ENCODE measurements at regions of chr21 and their contacts with region 1.

Region 1: GRCh38 chr21:33947451-33948095 is 32.0 kb upstream of the ATP5PO start:
- DNase-seq: peak; percentile 20
- H3K4me3 ChIP-seq: peak overlapping the region; percentile 9 to 52 (median 28)
- H3K27ac ChIP-seq: peak overlapping the region; percentile 83 to 94 (median 90)
- H3K4me1 ChIP-seq: peaks cover 23 to 59% (median 40%) of the 10 kb centered on the region in 3 donors
- H3K27me3 ChIP-seq: no peaks in the 10 kb centered on the region
- CTCF ChIP-seq: no peak
- POLR2A ChIP-seq: no peak

Region 2: DNA sequence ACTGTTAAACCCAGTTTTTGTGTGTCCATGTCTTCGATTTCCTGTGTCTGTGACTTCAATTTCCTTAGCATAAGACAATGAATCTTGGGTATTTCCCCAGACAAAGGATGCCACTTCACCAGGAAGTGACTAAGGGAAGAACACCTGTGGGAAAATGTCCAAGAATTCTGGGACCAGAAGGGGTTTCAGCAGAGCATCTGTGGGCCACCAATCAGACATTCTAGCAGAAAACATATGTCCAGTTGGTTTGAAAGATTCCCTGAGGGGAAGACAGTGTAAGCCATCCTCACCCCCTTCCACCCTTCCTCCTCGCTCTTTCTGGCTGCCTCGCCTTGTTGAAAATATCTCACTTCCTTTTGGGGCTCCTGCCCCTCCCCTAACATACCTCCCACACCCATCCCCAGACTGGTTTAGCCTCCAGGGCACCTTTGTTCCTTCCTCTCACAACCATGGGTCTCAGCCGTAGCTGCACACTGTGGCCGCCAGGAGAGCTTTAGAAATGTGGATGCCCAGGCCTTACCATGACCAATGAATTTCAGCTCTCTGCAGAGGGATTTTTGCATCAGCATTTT is 648.3 kb before region 1 on chr21:
- intact Hi-C with region 1: no loop called
- DNase-seq: no peak
- H3K4me3 ChIP-seq: no peak overlapping the region
- H3K27ac ChIP-seq: peak overlapping the region in 2 of 4 donors; percentile 30 to 41
- H3K4me1 ChIP-seq: peaks cover 0 to 36% (median 13%) of the 10 kb centered on the region in 3 donors
- H3K27me3 ChIP-seq: no peaks in the 10 kb centered on the region
- CTCF ChIP-seq: peak in 2 of 6 experiments; percentile 26 to 51
- POLR2A ChIP-seq: no peak

Region 3: DNA sequence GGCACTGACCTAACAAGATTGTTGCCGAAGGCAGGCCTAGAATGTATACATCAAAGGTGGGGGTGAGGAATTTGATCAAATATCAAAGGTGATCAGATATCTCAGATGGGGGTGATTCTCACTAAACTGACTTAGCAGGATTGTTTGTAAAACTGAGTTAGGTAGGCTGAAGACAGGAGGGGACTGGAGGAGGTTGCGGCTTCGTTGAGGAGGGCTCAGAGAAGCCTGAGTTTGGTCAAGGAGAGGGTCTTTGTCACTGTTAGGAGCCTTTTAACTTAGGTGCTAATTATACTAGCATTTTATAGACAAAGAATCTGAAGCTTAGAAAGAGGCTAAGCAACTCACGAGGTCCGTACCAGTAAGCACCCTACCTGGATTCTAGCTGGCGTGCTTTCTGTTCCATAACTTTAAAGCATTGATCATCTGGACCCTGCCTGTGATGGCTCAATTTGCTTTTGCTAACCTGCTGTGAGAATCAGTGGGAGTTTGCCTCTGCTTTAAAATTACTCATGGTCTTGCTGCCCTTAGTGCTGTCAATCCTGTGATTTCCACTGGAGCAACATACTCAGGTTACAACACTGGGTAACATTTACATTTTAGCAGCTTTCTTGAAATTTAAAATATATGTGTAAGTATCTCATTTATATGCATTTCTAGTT is 255.5 kb before region 1 on chr21:
- intact Hi-C with region 1: no loop called
- DNase-seq: no peak
- H3K4me3 ChIP-seq: no peak overlapping the region
- H3K27ac ChIP-seq: no peak overlapping the region
- H3K4me1 ChIP-seq: peaks cover 0 to 26% (median 0%) of the 10 kb centered on the region in 3 donors
- H3K27me3 ChIP-seq: no peaks in the 10 kb centered on the region
- CTCF ChIP-seq: no peak
- POLR2A ChIP-seq: no peak

Region 4: GRCh38 chr21:34073032-34073869 is 125.7 kb after region 1 on chr21 and contains the starts of genes MRPS6 and SLC5A3:
- intact Hi-C with region 1: loop called (anchors 10 kb)
- DNase-seq: peak; percentile 14
- H3K4me3 ChIP-seq: peak within 1 kb of the TSS; percentile 75 to 95 (median 83)
- H3K27ac ChIP-seq: peak within 1 kb of the TSS; percentile 89 to 94 (median 92)
- H3K4me1 ChIP-seq: peaks cover 13 to 48% (median 23%) of the 10 kb centered on the region in 3 donors
- H3K27me3 ChIP-seq: no peaks in the 10 kb centered on the region
- CTCF ChIP-seq: no peak
- POLR2A ChIP-seq: peak in 2 of 4 donors; percentile 82 to 89
- total RNA-seq, gene MRPS6: 13.4 to 32.2 (median 20.1) TPM
- total RNA-seq, gene SLC5A3: 9.0 to 20.0 (median 11.4) TPM

Region 5: DNA sequence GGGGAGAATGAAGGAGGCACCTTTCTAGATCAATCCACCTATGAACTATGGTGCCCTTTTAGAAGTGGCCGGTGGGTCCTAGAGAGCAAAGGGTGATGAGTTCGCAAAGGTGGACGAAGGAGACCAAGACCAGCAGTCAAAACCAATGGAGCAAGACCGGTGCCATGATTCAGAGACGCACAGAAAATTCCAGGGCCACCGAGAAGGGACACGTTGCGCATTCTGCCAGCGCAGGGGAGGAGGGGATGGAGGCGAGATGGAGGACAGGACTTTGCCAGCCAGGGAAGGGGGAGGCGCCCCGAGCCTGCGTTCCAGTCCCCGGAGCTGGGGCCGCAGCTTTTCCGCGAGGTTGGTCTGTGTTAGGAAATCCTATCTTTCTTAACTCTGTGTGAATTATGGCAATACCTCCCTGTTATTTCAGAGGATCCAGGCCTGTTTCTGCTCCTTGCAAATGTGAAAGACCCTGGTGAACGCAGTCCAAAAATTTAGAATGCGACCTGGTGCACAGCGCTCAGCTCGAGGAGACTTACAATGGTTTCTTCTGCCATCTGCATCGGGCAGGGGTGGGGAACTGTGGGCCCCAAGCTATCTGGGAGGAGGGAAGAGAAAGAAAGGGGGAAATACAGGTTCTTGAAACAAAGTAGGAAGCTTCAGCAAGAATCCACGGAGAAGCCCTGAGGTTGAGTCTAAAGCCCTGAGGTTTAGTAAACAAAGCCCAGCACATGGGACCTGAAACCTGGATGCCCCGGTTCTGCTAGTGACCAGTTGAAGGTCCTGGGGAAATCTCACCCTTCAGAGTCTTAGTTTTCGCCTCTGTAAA is 255.2 kb after region 1 on chr21:
- intact Hi-C with region 1: loop called (anchors 10 kb)
- DNase-seq: no peak
- H3K4me3 ChIP-seq: peak overlapping the region in 2 of 4 donors; percentile 41 to 50
- H3K27ac ChIP-seq: peak overlapping the region in 3 of 4 donors; percentile 62 to 82 (median 70)
- H3K4me1 ChIP-seq: peaks cover 2 to 52% (median 6%) of the 10 kb centered on the region in 3 donors
- H3K27me3 ChIP-seq: no peaks in the 10 kb centered on the region
- CTCF ChIP-seq: no peak
- POLR2A ChIP-seq: no peak